SK-N-SH (cell line): ENCODE measurements at regions of chr3 and their contacts with region 1.

Region 1: DNA sequence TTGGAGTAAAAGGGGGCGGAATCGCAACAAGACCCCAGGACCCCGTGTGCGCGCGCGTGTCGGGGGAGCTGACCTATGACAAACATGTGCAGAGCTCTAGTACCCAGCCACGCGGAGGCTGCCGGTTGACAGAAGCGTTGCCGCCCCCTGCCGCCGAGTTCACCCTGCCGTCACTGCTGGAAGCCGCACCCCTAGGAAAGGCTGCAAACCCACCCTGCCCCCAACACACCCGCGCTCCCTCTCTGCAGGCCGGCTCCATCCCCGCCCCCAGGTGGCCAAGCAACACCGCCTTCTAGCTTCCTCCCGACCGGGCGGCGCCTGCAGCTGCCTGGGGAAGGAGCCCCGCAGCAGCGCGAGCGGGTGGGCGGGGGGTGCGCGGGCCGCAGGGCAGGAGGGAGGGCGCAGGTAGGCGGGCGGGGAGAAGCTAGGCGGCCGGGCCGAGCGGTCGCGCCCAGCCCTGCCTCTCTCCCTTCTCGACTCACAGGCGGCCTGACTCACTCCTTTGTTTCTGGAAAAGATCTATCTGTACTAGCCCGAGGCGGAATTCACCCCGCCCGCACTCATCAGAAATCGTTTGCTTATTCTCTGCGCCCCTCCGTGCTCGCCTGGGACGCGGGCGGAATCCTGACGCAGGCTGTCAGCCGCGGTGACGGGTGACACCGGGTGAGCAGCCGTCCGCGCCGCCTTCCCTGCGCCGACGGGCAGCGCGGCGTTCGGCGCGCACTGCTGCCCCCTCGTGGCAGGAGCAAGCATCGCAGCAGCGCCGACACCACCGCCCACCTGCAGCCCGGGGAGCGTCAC is 160.8 kb downstream of the GAP43 start:
- DNase-seq: peak; percentile 95
- H3K4me3 ChIP-seq: peak overlapping the region; percentile 59 to 66
- H3K27ac ChIP-seq: peak overlapping the region; percentile 97
- H3K4me1 ChIP-seq: peaks cover 10% of the 10 kb centered on the region in 2 experiments; a peak in 3 of 4 replicates
- H3K27me3 ChIP-seq: no peaks in the 10 kb centered on the region
- CTCF ChIP-seq: peak; percentile 96
- EP300 ChIP-seq: peak in 1 of 2 experiments; percentile 45; a peak in 2 of 4 replicates
- RAD21 ChIP-seq: peak; percentile 85

Region 2: GRCh38 chr3:115092220-115092791 is 691.8 kb before region 1 on chr3:
- CTCF ChIA-PET with region 1: interaction called, 34 read pairs
- POLR2A ChIA-PET with region 1: no interaction called
- DNase-seq: peak; percentile 47
- H3K4me3 ChIP-seq: peak overlapping the region in 1 of 2 experiments; percentile 20; a peak in 1 of 4 replicates
- H3K27ac ChIP-seq: peak overlapping the region in 1 of 2 experiments; percentile 39; a peak in 2 of 4 replicates
- H3K4me1 ChIP-seq: peaks cover 0 to 5% of the 10 kb centered on the region in 2 experiments; a peak in 2 of 4 replicates
- H3K27me3 ChIP-seq: no peaks in the 10 kb centered on the region
- CTCF ChIP-seq: peak; percentile 81
- EP300 ChIP-seq: no peak
- RAD21 ChIP-seq: peak; percentile 77

Region 3: GRCh38 chr3:115208066-115208750 is 575.9 kb before region 1 on chr3:
- CTCF ChIA-PET with region 1: interaction called, 12 read pairs
- POLR2A ChIA-PET with region 1: no interaction called
- DNase-seq: no peak
- H3K4me3 ChIP-seq: no peak overlapping the region
- H3K27ac ChIP-seq: no peak overlapping the region
- H3K4me1 ChIP-seq: no peaks in the 10 kb centered on the region
- H3K27me3 ChIP-seq: no peaks in the 10 kb centered on the region
- CTCF ChIP-seq: no peak
- EP300 ChIP-seq: no peak
- RAD21 ChIP-seq: no peak

Region 4: DNA sequence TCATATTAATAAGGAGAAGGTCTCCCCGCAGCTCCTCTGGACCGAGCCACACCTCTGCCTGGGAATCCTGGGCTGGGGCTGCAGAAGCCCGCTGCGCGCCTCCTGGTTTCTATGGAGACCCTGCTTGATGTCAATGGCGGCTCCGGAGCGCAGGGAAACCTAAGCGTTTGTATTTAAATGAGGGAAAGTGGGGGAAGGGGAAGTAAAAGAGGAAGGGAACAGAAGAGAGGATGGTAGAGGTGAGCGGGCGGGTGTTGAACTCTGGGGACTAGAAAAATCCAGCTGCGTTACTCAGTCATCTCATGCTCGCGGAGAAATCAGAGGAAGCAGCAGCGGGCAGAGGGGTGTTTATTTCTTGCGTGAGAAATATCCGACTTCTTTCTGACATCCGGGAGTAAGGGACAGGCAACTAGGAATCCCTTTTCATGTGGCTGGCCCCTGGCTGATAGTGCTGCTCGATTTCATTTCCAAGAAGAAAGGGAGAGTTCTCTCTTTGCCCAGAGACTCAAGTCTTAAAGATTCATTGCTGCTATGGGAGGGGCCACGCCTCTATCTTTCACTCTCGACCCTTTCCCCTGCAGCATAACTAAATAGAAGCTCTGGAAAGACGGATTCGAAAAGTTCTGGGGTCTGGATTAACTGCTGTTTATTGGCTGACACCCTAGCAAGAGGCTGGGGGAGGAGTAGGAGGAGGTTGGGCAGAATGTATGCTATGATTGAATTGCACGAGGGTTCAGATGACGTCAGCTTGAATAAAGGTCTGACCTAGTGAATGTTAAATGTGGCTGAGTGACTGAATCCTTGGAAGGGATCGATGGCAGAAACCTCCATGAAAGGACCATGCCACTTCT is 271.3 kb before region 1 on chr3:
- CTCF ChIA-PET with region 1: interaction called, 11 read pairs
- POLR2A ChIA-PET with region 1: no interaction called
- DNase-seq: peak; percentile 62
- H3K4me3 ChIP-seq: peak overlapping the region; percentile 57
- H3K27ac ChIP-seq: peak overlapping the region; percentile 62 to 89
- H3K4me1 ChIP-seq: peaks cover 3 to 17% of the 10 kb centered on the region in 2 experiments; a peak in 3 of 4 replicates
- H3K27me3 ChIP-seq: no peaks in the 10 kb centered on the region
- CTCF ChIP-seq: no peak
- EP300 ChIP-seq: no peak; a peak in 1 of 4 replicates
- RAD21 ChIP-seq: 0 out of 2 replicates have a peak, but pooled peaks have one; percentile 1

Region 5: GRCh38 chr3:115704661-115705338 is 79.3 kb before region 1 on chr3:
- CTCF ChIA-PET with region 1: interaction called, 29 read pairs
- POLR2A ChIA-PET with region 1: no interaction called
- DNase-seq: no peak
- H3K4me3 ChIP-seq: no peak overlapping the region
- H3K27ac ChIP-seq: peak overlapping the region; percentile 25 to 76; a peak in 3 of 4 replicates
- H3K4me1 ChIP-seq: peaks cover 3 to 23% of the 10 kb centered on the region in 2 experiments; a peak in 3 of 4 replicates
- H3K27me3 ChIP-seq: no peaks in the 10 kb centered on the region
- CTCF ChIP-seq: no peak
- EP300 ChIP-seq: no peak
- RAD21 ChIP-seq: no peak

Region 6: DNA sequence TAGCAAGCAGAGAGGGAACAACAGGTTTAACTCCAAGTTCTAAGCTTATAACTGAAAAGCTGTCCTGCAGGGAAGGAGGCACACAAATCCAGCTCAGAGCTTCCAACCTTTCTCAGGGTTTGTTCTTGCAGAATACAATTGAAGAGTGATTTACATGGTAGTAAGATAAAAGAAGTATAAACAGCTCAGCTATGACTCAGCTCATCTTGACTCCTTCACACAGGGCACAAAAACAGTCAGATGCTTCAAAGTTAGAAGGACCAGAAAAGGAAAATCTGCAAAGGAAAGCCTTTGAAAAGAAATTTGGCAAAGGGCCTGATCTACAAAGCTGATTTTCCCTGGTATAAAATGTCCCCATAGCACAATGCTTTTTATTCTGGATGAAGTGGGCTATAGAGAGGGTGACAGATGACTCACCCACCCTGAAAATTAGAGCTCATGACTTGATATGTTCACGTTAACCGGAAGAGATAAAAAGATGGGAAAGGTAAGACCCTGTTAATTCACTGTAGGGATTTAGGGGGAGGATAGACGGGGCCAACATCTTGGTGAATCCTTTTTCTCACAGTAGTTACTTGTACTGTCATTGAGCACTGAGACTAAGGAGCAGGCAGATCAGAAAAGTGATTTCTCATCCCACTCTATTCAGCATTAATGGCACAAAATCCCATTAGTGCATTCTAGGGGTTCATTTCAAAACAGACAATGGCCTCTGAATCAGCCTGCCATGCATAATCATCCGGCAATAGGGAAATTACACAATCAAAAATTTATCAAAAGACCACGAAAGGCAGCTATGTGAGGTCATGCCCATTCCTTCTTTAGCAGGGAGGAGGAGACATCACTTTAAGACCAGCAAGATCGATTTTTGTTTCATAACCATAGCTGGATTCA is 17.3 kb before region 1 on chr3:
- CTCF ChIA-PET with region 1: interaction called, 13 read pairs
- POLR2A ChIA-PET with region 1: interaction called, 3 read pairs
- DNase-seq: no peak
- H3K4me3 ChIP-seq: no peak overlapping the region
- H3K27ac ChIP-seq: peak overlapping the region in 1 of 2 experiments; percentile 53; a peak in 2 of 4 replicates
- H3K4me1 ChIP-seq: peaks cover 4 to 15% of the 10 kb centered on the region in 2 experiments; a peak in 3 of 4 replicates
- H3K27me3 ChIP-seq: no peaks in the 10 kb centered on the region
- CTCF ChIP-seq: no peak
- EP300 ChIP-seq: no peak
- RAD21 ChIP-seq: no peak